Activated CD4-positive, alpha-beta T cell treated with anti-CD3 and anti-CD28 coated beads for 36 hours (primary cell): ENCODE measurements at regions of chr18 and their contacts with region 1.

Region 1: DNA sequence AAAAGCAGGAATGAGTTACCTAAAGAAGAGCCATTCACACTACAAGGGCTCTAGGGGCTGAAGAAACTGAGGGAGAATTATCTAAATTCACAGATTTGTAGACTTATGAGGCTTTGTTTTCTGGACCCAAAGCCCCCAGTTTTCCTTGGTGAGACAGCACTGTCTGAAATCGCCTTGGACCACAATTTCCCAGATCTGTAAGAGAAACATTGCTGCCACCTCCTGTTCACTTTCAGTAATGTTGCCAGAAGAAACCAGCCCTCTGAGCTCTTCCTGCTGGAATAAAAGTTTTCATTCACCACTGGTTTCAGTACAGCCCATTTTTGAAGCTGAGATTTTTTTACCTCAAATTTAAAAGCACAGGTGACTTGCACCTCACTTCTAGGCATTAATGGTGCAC is 169.2 kb downstream of the CDH20 start:
- DNase-seq: peak; percentile 25
- ATAC-seq: no peak
- H3K4me3 Mint-ChIP-seq: no peak overlapping the region
- H3K27ac Mint-ChIP-seq: no peak overlapping the region
- H3K4me1 Mint-ChIP-seq: no peaks in the 10 kb centered on the region
- H3K27me3 Mint-ChIP-seq: peaks cover 10% of the 10 kb centered on the region

Region 2: GRCh38 chr18:60684843-60685513 is 817.5 kb before region 1 on chr18:
- CTCF ChIA-PET with region 1: no interaction called
- POLR2A ChIA-PET with region 1: no interaction called
- intact Hi-C with region 1: loop called in 1 of 2 experiments (anchors 2 kb)
- DNase-seq: no peak
- ATAC-seq: no peak
- H3K4me3 Mint-ChIP-seq: no peak overlapping the region
- H3K27ac Mint-ChIP-seq: no peak overlapping the region
- H3K4me1 Mint-ChIP-seq: no peaks in the 10 kb centered on the region
- H3K27me3 Mint-ChIP-seq: no peaks in the 10 kb centered on the region

Region 3: DNA sequence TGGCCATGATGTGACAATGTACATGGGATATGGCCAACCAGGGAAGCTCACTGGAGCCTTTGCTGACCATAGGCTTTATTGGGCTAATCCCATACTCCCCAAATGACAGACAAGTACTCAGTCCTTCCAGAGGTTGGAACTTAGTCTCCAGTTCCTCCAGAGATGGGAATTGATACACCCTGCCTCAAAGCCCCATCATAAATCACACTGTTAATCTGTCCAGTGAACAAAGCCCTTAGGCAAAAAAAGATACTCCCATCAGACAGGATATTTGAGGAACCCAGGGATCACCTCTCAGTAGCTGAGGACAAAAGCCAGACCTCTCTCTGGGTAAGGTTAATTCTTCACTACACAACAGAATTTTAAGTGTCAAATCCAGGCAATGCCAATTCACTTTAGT is 416.7 kb before region 1 on chr18:
- CTCF ChIA-PET with region 1: no interaction called
- POLR2A ChIA-PET with region 1: no interaction called
- intact Hi-C with region 1: loop called in 1 of 2 experiments (anchors 1 kb)
- DNase-seq: no peak
- ATAC-seq: no peak
- H3K4me3 Mint-ChIP-seq: no peak overlapping the region
- H3K27ac Mint-ChIP-seq: no peak overlapping the region
- H3K4me1 Mint-ChIP-seq: no peaks in the 10 kb centered on the region
- H3K27me3 Mint-ChIP-seq: no peaks in the 10 kb centered on the region

Region 4: GRCh38 chr18:61322265-61322873 is 180.1 kb before region 1 on chr18:
- CTCF ChIA-PET with region 1: interaction called, 8 read pairs
- POLR2A ChIA-PET with region 1: no interaction called
- intact Hi-C with region 1: loop called (anchors 1 to 2 kb)
- DNase-seq: peak; percentile 73
- ATAC-seq: peak; percentile 74
- H3K4me3 Mint-ChIP-seq: no peak overlapping the region
- H3K27ac Mint-ChIP-seq: no peak overlapping the region
- H3K4me1 Mint-ChIP-seq: no peaks in the 10 kb centered on the region
- H3K27me3 Mint-ChIP-seq: no peaks in the 10 kb centered on the region

Region 5: DNA sequence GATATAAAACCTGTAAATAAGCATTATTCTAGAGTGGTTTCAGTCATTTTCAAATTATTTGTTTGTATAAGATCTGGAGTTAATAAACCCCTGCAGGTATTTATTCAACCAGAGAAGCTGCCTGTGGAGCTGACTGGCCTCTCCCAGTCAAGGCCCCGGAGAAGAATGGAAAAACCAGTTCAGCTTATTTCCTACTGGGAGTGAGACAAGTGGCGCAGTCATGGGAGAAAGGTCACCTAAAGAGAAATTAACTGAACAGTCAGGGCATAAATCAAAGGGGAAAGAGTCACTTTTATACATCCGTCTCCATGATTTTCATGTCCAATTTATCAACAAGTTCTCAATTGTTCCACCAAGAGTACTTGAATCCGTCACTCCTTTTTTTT is 149.4 kb after region 1 on chr18:
- CTCF ChIA-PET with region 1: no interaction called
- POLR2A ChIA-PET with region 1: no interaction called
- intact Hi-C with region 1: no loop called
- DNase-seq: no peak
- ATAC-seq: no peak
- H3K4me3 Mint-ChIP-seq: no peak overlapping the region
- H3K27ac Mint-ChIP-seq: no peak overlapping the region
- H3K4me1 Mint-ChIP-seq: no peaks in the 10 kb centered on the region
- H3K27me3 Mint-ChIP-seq: peaks cover 2% of the 10 kb centered on the region